ENCODE measurements at regions of chr13 and their contacts with region 1.

Region 1: GRCh38 chr13:40580566-40581276 is 85.7 kb downstream of the FOXO1 start:
- DNase-seq: peak; percentile 80
- H3K4me3 ChIP-seq: peak overlapping the region; percentile 55
- H3K27ac ChIP-seq: peak overlapping the region; percentile 99
- H3K4me1 ChIP-seq: peaks cover 99% of the 10 kb centered on the region
- CTCF ChIP-seq: no peak

Region 2: DNA sequence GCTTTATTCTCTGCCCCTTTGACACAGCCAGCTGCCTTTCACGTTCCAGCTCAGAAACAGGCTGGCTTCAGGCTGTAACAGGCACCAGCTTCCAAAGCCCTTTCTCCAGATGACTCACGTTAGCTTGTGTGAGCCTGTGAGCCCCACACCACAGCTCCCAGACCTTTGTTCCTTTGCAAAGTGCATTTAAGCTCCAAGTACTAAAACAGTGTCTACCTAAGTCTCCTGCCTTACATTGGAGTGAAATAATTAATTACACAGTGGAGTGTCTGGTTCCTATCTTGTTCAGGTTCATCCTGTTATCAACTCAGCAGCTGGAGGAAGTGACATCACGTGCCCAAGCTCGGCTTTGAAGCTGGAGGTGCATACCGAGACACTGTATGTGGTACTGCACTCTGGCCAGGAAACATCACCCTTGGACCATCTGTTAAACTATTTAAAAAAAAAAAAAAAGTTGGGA is 390.1 kb before region 1 on chr13:
- CTCF ChIA-PET with region 1: no interaction called
- POLR2A ChIA-PET with region 1: no interaction called
- intact Hi-C with region 1: loop called (anchors 2 kb)
- DNase-seq: peak; percentile 91
- H3K4me3 ChIP-seq: peak overlapping the region; percentile 12
- H3K27ac ChIP-seq: peak overlapping the region; percentile 48
- H3K4me1 ChIP-seq: peaks cover 23% of the 10 kb centered on the region
- CTCF ChIP-seq: no peak; the same call in 1 of the 2 replicates

Region 3: GRCh38 chr13:40477623-40478608 is 102.8 kb before region 1 on chr13:
- CTCF ChIA-PET with region 1: no interaction called
- POLR2A ChIA-PET with region 1: interaction called, 9 read pairs
- intact Hi-C with region 1: loop called (anchors 1 kb)
- DNase-seq: peak; percentile 54
- H3K4me3 ChIP-seq: peak overlapping the region; percentile 67
- H3K27ac ChIP-seq: peak overlapping the region; percentile 96
- H3K4me1 ChIP-seq: peaks cover 83% of the 10 kb centered on the region
- CTCF ChIP-seq: no peak

Region 4: DNA sequence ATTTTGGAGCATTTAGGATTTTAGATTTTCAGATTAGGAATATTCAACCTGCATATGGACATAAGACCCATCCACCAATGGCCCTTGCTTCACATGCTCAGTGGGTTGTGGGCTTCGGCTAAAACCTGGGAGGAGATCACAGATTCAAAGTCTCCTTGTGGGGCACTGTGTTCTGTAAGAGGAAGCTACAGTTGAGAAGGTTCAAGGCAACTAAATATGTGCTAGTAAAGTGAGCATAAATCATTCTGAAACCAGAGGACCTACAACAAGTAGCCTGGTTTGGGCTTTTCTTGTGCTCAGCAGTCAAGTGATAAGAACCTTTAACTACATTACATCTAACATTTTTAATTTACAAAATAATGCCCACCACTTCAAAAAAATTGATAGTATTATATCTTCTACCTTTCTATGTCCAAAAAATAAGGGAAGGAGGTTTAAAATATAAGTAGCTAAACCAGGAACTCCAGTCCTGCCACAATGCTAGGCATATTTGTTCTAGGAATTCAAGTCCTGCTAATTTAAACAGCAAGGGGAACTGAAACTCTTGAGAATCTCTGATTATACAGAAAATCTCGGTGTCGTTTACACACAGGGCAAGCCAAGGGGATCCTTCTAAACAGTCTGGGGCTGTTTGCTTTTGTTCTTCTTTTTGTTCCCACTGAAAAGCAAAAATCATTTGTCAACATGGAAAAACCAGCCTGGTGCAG is 49.1 kb after region 1 on chr13:
- CTCF ChIA-PET with region 1: no interaction called
- POLR2A ChIA-PET with region 1: no interaction called
- intact Hi-C with region 1: no loop called
- DNase-seq: peak; percentile 78
- H3K4me3 ChIP-seq: peak overlapping the region; percentile 56
- H3K27ac ChIP-seq: peak overlapping the region; percentile 77
- H3K4me1 ChIP-seq: peaks cover 68% of the 10 kb centered on the region
- CTCF ChIP-seq: peak; percentile 34; the same call in 1 of the 2 replicates

Region 5: GRCh38 chr13:40653527-40654318 is 73.0 kb after region 1 on chr13:
- CTCF ChIA-PET with region 1: no interaction called
- POLR2A ChIA-PET with region 1: interaction called, 7 read pairs
- intact Hi-C with region 1: loop called (anchors 2 kb)
- DNase-seq: peak; percentile 58
- H3K4me3 ChIP-seq: peak overlapping the region; percentile 64
- H3K27ac ChIP-seq: peak overlapping the region; percentile 96
- H3K4me1 ChIP-seq: peaks cover 95% of the 10 kb centered on the region
- CTCF ChIP-seq: no peak; the same call in 1 of the 2 replicates